Activated CD8-positive, alpha-beta T cell treated with anti-CD3 and anti-CD28 coated beads, Interleukin-2, amount 10 ng/mL, durations not matched to agents 7 days and 5 days (primary cell): ENCODE measurements at regions of chr14 and their contacts with region 1.

Region 1: GRCh38 chr14:64338616-64339316 is 44.6 kb upstream of the ESR2 start:
- DNase-seq: peak; percentile 96
- ATAC-seq: peak; percentile 85
- H3K4me3 Mint-ChIP-seq: peak overlapping the region; percentile 92
- H3K27ac Mint-ChIP-seq: peak overlapping the region; percentile 92
- H3K4me1 Mint-ChIP-seq: peaks cover 30% of the 10 kb centered on the region
- H3K27me3 Mint-ChIP-seq: no peaks in the 10 kb centered on the region

Region 2: DNA sequence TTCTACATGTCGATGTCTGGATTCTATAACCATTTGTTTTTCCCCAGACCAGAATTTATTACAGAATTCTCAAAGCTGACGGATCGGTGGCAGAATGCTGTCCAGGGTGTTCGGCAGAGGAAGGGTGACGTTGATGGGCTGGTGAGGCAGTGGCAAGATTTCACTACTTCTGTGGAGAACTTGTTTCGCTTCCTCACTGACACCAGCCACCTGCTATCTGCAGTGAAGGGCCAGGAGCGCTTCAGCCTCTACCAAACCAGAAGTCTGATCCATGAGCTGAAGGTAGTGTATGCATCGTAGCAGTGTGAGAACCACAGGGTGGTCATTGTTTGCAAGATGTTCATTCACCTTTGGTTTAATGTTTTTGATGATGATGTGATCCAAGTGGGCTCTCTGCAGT is 168.6 kb before region 1 on chr14:
- CTCF ChIA-PET with region 1: no interaction called
- POLR2A ChIA-PET with region 1: no interaction called
- DNase-seq: no peak
- ATAC-seq: no peak
- H3K4me3 Mint-ChIP-seq: no peak overlapping the region
- H3K27ac Mint-ChIP-seq: no peak overlapping the region
- H3K4me1 Mint-ChIP-seq: no peaks in the 10 kb centered on the region
- H3K27me3 Mint-ChIP-seq: no peaks in the 10 kb centered on the region

Region 3: DNA sequence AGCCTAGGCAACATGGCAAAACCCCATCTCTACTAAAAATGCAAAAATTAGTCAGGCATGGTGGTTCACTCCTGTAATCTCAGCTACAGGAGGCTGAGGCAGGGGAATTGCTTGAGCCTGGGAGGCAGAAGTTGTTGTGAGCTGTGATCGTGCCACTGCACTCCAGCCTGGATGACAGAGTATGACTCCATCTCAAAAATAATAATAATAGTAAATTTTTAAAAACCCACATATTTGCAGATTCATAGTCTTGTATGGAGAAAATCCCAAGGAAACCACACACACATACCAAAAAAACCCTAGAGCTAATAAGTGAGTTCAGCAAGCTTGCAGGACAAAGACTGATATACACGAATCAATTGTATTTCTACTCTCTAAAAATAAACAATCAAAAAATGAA is 30.4 kb after region 1 on chr14:
- CTCF ChIA-PET with region 1: interaction called, 13 read pairs
- POLR2A ChIA-PET with region 1: no interaction called
- DNase-seq: no peak
- ATAC-seq: no peak
- H3K4me3 Mint-ChIP-seq: no peak overlapping the region
- H3K27ac Mint-ChIP-seq: no peak overlapping the region
- H3K4me1 Mint-ChIP-seq: no peaks in the 10 kb centered on the region
- H3K27me3 Mint-ChIP-seq: no peaks in the 10 kb centered on the region

Region 4: DNA sequence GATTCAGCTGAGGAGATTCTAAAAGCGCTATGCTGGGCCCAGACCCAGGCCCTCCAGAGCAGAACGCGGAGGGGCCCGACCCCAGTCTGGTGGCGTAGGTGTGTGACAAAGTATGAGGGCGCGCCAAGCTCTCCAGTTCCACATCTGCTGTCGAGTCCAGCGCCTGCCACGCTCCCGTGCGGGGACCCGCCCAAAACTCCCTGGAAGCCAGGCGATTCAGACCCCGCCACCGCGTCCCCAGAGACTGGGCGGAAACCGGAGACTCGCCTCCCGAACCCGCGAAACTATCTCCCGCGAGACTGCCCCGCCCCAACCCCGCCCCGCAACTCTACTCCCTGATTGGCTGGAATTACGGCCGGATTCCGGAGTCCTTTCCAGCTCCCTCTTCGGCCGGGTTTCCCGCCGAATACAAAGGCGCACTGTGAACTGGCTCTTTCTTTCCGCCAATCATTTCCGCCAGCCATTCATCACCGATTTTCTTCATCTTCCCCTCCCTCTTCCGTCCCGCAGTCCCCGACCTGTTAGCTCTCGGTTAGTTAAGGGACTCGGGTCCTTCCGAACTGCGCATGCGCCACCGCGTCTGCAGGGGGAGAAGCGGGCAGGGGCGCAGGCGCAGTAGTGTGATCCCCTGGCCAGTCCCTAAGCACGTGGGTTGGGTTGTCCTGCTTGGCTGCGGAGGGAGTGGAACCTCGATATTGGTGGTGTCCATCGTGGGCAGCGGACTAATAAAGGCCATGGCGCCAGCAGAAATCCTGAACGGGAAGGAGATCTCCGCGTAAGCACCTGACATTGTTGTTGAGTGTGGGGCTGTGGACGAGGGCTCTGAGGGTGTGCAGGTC is 49.1 kb after region 1 on chr14 and contains the start of gene MTHFD1:
- CTCF ChIA-PET with region 1: interaction called, 14 read pairs
- POLR2A ChIA-PET with region 1: interaction called, 20 read pairs
- DNase-seq: peak; percentile 99
- ATAC-seq: peak; percentile 92
- H3K4me3 Mint-ChIP-seq: peak within 1 kb of the TSS; percentile 99
- H3K27ac Mint-ChIP-seq: peak within 1 kb of the TSS; percentile 94
- H3K4me1 Mint-ChIP-seq: peaks cover 45% of the 10 kb centered on the region
- H3K27me3 Mint-ChIP-seq: no peaks in the 10 kb centered on the region
- total RNA-seq, gene MTHFD1: 231 to 238 TPM

Region 5: DNA sequence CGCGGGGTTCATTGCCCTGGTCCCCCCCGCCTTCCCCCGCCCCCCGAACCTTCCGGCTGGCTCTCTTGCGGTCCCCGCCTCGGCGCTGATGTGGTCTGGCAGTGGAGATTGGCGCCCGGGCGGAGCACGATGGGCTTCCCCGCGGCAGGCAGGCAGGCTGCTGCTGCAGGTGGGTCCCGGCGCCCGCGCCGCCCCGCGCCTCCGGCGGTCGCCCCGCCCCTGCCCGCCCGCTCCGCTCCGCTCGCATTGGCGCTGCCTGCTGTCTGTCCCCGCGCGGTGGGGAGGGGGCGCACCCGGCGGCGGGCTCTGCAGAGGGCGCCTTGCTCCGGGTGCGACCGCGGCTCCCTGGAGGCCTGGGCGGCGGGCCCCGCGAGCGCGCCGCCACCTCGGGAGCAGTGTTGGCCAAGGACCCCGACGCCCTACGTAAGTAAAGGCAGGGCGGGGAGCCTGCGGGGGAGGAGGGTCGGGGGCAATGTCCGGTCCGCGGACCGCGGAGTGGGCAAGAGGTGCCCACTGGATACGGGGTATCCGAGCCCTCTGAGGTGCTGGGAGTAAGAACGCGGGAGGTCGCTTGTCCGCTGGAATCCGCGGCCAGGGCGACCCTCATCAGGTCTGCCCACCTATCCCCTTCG is 126.5 kb after region 1 on chr14 and contains the start of gene AKAP5:
- CTCF ChIA-PET with region 1: interaction called, 12 read pairs
- POLR2A ChIA-PET with region 1: no interaction called
- DNase-seq: peak; percentile 71
- ATAC-seq: peak; percentile 92
- H3K4me3 Mint-ChIP-seq: peak within 1 kb of the TSS; percentile 80
- H3K27ac Mint-ChIP-seq: peak within 1 kb of the TSS; percentile 71
- H3K4me1 Mint-ChIP-seq: peaks cover 40% of the 10 kb centered on the region
- H3K27me3 Mint-ChIP-seq: peaks cover 4% of the 10 kb centered on the region
- total RNA-seq, gene AKAP5: 1.9 to 2.1 TPM

Region 6: DNA sequence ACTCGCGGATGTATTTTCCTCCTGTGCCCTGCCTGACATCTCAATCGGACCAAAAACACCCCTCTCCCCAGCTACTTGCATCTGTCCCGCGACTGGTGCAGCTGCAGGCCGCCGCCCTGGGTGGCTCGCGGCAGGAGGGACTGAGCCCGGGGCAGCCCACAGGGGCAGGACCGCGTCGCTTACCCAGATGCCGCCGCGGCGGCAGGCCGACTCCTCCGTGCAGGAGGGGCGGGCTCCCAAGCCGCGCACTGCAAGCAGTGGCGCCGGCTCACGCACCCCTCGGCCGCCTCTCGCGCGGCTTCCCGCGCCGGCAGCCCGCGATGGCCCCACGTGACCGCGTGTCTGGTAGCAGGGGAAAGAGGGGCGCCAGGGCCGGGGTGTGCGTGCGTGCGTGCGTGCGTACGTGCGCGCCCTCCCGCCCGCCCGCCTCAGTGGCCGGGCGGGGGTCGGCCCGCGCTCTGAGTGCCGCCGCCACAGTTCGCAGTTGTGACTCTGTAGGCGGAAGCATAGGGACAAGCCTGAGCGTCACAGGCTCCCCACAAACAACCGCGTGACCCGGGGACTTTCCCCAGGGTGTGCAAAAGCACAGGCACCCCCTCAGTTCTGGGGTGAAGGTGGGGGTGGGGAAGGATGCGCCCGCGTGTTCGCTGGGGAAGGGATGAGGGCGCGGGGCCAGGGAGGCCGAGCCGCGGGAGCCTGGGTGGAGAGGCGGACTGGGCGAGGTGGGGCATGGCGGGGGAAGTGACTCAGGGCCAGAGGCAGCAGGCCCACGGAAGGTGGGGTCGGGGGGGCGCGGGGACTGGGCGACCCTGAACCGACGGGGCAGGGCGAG is 164.9 kb after region 1 on chr14 and contains the start of gene ZBTB25:
- CTCF ChIA-PET with region 1: interaction called, 6 read pairs
- POLR2A ChIA-PET with region 1: interaction called, 14 read pairs
- DNase-seq: peak; percentile 97
- ATAC-seq: peak; percentile 72
- H3K4me3 Mint-ChIP-seq: peak within 1 kb of the TSS; percentile 96
- H3K27ac Mint-ChIP-seq: peak within 1 kb of the TSS; percentile 100
- H3K4me1 Mint-ChIP-seq: peaks cover 50% of the 10 kb centered on the region
- H3K27me3 Mint-ChIP-seq: no peaks in the 10 kb centered on the region
- total RNA-seq, gene ZBTB25: 26.2 to 28.2 TPM

Region 7: DNA sequence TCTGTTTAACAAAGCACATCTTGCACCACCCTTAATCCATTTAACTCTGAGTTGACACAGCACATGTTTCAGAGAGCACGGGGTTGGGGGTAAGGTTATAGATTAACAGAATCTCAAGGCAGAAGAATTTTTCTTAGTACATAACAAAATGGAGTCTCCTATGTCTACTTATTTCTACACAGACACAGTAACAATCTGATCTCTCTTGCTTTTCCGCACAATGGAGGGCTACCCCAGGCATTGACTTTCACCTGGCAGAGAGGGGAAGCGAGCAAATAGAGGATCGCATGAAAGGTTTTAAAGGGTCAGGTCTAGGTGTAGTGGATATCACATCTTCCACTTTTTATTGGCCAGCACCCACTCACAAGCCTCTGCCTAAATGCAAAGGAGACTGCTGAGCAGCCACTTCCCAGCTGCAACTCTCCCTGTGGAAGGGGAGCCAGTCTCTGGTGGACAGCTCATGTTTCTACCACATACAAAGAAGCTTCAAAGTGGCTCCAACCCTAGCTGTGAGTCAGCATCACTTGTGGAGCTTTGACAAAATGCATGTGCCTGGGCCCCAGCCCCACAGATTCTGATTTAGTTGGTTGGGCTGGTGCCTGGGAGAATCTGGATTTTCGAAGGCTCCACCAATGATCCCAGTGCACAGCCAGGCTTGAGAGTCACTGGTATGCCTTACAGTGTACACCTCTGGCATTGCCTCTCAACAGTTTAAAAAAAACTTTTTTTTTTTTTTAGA is 640.7 kb after region 1 on chr14:
- CTCF ChIA-PET with region 1: no interaction called
- POLR2A ChIA-PET with region 1: no interaction called
- DNase-seq: no peak
- ATAC-seq: no peak
- H3K4me3 Mint-ChIP-seq: no peak overlapping the region
- H3K27ac Mint-ChIP-seq: no peak overlapping the region
- H3K4me1 Mint-ChIP-seq: peaks cover 5% of the 10 kb centered on the region
- H3K27me3 Mint-ChIP-seq: peaks cover 32% of the 10 kb centered on the region